ENCODE measurements at regions of chr7 and their contacts with region 1.

Region 1: GRCh38 chr7:44587843-44588711 is 6.0 kb upstream of the TMED4 start:
- DNase-seq: peak; percentile 81
- H3K4me3 Mint-ChIP-seq: no peak overlapping the region
- H3K27ac Mint-ChIP-seq: no peak overlapping the region
- H3K4me1 Mint-ChIP-seq: peaks cover 12% of the 10 kb centered on the region
- H3K27me3 Mint-ChIP-seq: no peaks in the 10 kb centered on the region
- CTCF ChIP-seq: peak; percentile 79

Region 2: GRCh38 chr7:44353668-44354067 is 234.4 kb before region 1 on chr7:
- CTCF ChIA-PET with region 1: no interaction called
- intact Hi-C with region 1: no loop called
- DNase-seq: no peak
- H3K4me3 Mint-ChIP-seq: no peak overlapping the region
- H3K27ac Mint-ChIP-seq: no peak overlapping the region
- H3K4me1 Mint-ChIP-seq: no peaks in the 10 kb centered on the region
- H3K27me3 Mint-ChIP-seq: peaks cover 51% of the 10 kb centered on the region
- CTCF ChIP-seq: no peak

Region 3: DNA sequence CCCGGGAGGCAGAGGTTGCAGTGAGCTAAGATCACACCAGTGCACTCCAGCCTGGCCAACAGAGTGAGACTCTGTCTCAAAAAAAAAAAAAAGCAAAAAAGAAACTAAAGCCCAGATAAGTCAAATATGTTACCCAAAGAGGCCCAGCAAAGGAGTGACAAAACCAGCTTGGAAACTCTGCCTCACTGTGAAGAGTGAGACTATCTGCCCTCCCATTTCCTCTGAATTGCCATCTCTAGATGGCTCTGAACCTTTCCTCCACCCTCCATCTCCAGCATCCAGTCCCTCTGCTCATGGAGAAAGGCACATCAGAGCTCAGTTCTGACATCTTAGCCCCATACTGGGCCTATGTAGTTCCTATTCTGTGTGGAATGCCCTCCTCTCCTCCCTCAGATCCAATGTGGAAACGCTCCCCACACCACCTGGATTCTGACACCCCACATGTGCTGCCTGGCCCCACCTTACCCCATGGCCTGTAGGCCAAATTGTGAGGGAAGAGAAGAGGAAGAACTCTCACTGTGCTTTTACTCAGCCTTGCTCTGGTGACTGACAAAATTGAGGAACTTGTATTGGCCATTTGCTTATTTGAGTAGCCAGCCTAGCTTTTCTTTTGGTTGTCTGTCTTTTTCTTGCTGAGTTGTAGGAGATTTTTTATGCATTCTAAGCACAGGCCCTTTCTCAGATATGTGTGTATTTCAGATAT is 79.6 kb before region 1 on chr7:
- CTCF ChIA-PET with region 1: no interaction called
- intact Hi-C with region 1: no loop called
- DNase-seq: no peak
- H3K4me3 Mint-ChIP-seq: no peak overlapping the region
- H3K27ac Mint-ChIP-seq: no peak overlapping the region
- H3K4me1 Mint-ChIP-seq: peaks cover 27% of the 10 kb centered on the region
- H3K27me3 Mint-ChIP-seq: no peaks in the 10 kb centered on the region
- CTCF ChIP-seq: no peak

Region 4: GRCh38 chr7:44685723-44686122 is 97.6 kb after region 1 on chr7:
- CTCF ChIA-PET with region 1: no interaction called
- intact Hi-C with region 1: loop called (anchors 5 kb)
- DNase-seq: no peak
- H3K4me3 Mint-ChIP-seq: no peak overlapping the region
- H3K27ac Mint-ChIP-seq: no peak overlapping the region
- H3K4me1 Mint-ChIP-seq: no peaks in the 10 kb centered on the region
- H3K27me3 Mint-ChIP-seq: no peaks in the 10 kb centered on the region
- CTCF ChIP-seq: no peak

Region 5: GRCh38 chr7:44805950-44806349 is 217.9 kb after region 1 on chr7:
- CTCF ChIA-PET with region 1: no interaction called
- intact Hi-C with region 1: no loop called
- DNase-seq: no peak
- H3K4me3 Mint-ChIP-seq: no peak overlapping the region
- H3K27ac Mint-ChIP-seq: no peak overlapping the region
- H3K4me1 Mint-ChIP-seq: peaks cover 10% of the 10 kb centered on the region
- H3K27me3 Mint-ChIP-seq: no peaks in the 10 kb centered on the region
- CTCF ChIP-seq: no peak

Region 6: DNA sequence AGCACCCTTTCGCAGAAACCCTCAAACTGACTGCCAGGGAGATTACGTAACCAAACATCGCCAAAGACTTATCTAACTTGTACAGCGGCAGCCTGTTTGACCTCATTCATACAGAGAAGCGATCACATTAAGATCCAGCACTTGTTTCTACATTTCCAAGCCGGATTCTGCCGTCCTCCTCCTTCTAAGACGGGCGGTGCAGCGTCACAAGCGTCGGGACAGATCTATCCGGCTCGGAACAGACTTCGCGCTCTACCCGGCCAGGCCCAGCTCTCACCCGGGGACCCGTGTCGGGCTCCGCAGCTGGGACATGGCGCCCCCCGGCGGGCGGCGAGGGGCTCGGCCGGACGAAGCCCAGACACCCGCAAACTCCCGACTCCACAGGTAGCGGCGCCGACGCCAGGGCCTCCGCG is 259.4 kb after region 1 on chr7:
- CTCF ChIA-PET with region 1: interaction called, 7 read pairs
- intact Hi-C with region 1: loop called (anchors 1 kb)
- DNase-seq: peak; percentile 96
- H3K4me3 Mint-ChIP-seq: peak overlapping the region; percentile 82
- H3K27ac Mint-ChIP-seq: peak overlapping the region; percentile 98
- H3K4me1 Mint-ChIP-seq: peaks cover 30% of the 10 kb centered on the region
- H3K27me3 Mint-ChIP-seq: no peaks in the 10 kb centered on the region
- CTCF ChIP-seq: peak; percentile 97

Region 7: GRCh38 chr7:44964384-44964825 is 376.3 kb after region 1 on chr7:
- CTCF ChIA-PET with region 1: no interaction called
- intact Hi-C with region 1: loop called (anchors 1 kb)
- DNase-seq: no peak
- H3K4me3 Mint-ChIP-seq: no peak overlapping the region
- H3K27ac Mint-ChIP-seq: no peak overlapping the region
- H3K4me1 Mint-ChIP-seq: no peaks in the 10 kb centered on the region
- H3K27me3 Mint-ChIP-seq: peaks cover 19% of the 10 kb centered on the region
- CTCF ChIP-seq: peak; percentile 43

Region 8: GRCh38 chr7:44990520-44991023 is 402.5 kb after region 1 on chr7:
- CTCF ChIA-PET with region 1: no interaction called
- intact Hi-C with region 1: no loop called
- DNase-seq: no peak
- H3K4me3 Mint-ChIP-seq: no peak overlapping the region
- H3K27ac Mint-ChIP-seq: peak overlapping the region; percentile 13
- H3K4me1 Mint-ChIP-seq: peaks cover 59% of the 10 kb centered on the region
- H3K27me3 Mint-ChIP-seq: no peaks in the 10 kb centered on the region
- CTCF ChIP-seq: no peak